ENCODE measurements at regions of chr10 and their contacts with region 1.

Region 1: GRCh38 chr10:79286318-79286951 is 60.8 kb upstream of the PPIF start:
- DNase-seq: peak; percentile 53 to 94 (median 86)
- ATAC-seq: peak; percentile 94
- H3K4me3 ChIP-seq: peak overlapping the region; percentile 16 to 23
- H3K4me3 Mint-ChIP-seq: peak overlapping the region; percentile 72
- H3K27ac ChIP-seq: peak overlapping the region; percentile 16 to 81
- H3K27ac Mint-ChIP-seq: peak overlapping the region; percentile 94
- H3K4me1 ChIP-seq: peaks cover 36% of the 10 kb centered on the region
- H3K4me1 Mint-ChIP-seq: peaks cover 36% of the 10 kb centered on the region
- H3K27me3 ChIP-seq: no peaks in the 10 kb centered on the region
- H3K27me3 Mint-ChIP-seq: no peaks in the 10 kb centered on the region
- CTCF ChIP-seq: no peak

Region 2: GRCh38 chr10:79242620-79243152 is 43.7 kb before region 1 on chr10:
- CTCF ChIA-PET with region 1: no interaction called
- POLR2A ChIA-PET with region 1: no interaction called
- intact Hi-C with region 1: loop called (anchors 1 to 2 kb)
- DNase-seq: peak in 8 of 9 experiments; percentile 13 to 80 (median 51)
- ATAC-seq: peak; percentile 51
- H3K4me3 ChIP-seq: peak overlapping the region; percentile 49 to 61
- H3K4me3 Mint-ChIP-seq: peak overlapping the region; percentile 76
- H3K27ac ChIP-seq: peak overlapping the region in 1 of 2 experiments; percentile 39
- H3K27ac Mint-ChIP-seq: no peak overlapping the region
- H3K4me1 ChIP-seq: peaks cover 33% of the 10 kb centered on the region
- H3K4me1 Mint-ChIP-seq: peaks cover 42% of the 10 kb centered on the region
- H3K27me3 ChIP-seq: no peaks in the 10 kb centered on the region
- H3K27me3 Mint-ChIP-seq: no peaks in the 10 kb centered on the region
- CTCF ChIP-seq: no peak

Region 3: GRCh38 chr10:79316671-79317431 is 30.4 kb after region 1 on chr10:
- CTCF ChIA-PET with region 1: no interaction called
- POLR2A ChIA-PET with region 1: interaction called, 4 read pairs
- intact Hi-C with region 1: loop called (anchors 1 kb)
- DNase-seq: peak in 3 of 9 experiments; percentile 33 to 58 (median 55)
- ATAC-seq: peak; percentile 37
- H3K4me3 ChIP-seq: peak overlapping the region; percentile 1 to 20
- H3K4me3 Mint-ChIP-seq: peak overlapping the region; percentile 58
- H3K27ac ChIP-seq: no peak overlapping the region
- H3K27ac Mint-ChIP-seq: peak overlapping the region; percentile 64
- H3K4me1 ChIP-seq: peaks cover 57% of the 10 kb centered on the region
- H3K4me1 Mint-ChIP-seq: peaks cover 58% of the 10 kb centered on the region
- H3K27me3 ChIP-seq: no peaks in the 10 kb centered on the region
- H3K27me3 Mint-ChIP-seq: no peaks in the 10 kb centered on the region
- CTCF ChIP-seq: no peak

Region 4: GRCh38 chr10:79322616-79323543 is 36.4 kb after region 1 on chr10:
- CTCF ChIA-PET with region 1: interaction called, 3 read pairs
- POLR2A ChIA-PET with region 1: interaction called, 4 read pairs
- intact Hi-C with region 1: loop called in 1 of 2 experiments (anchors 2 kb)
- DNase-seq: peak; percentile 60 to 93 (median 89)
- ATAC-seq: peak; percentile 89
- H3K4me3 ChIP-seq: peak overlapping the region; percentile 4 to 16
- H3K4me3 Mint-ChIP-seq: peak overlapping the region; percentile 77
- H3K27ac ChIP-seq: peak overlapping the region; percentile 51 to 70
- H3K27ac Mint-ChIP-seq: peak overlapping the region; percentile 95
- H3K4me1 ChIP-seq: peaks cover 68% of the 10 kb centered on the region
- H3K4me1 Mint-ChIP-seq: peaks cover 65% of the 10 kb centered on the region
- H3K27me3 ChIP-seq: no peaks in the 10 kb centered on the region
- H3K27me3 Mint-ChIP-seq: no peaks in the 10 kb centered on the region
- CTCF ChIP-seq: no peak

Measured in CD8-positive, alpha-beta T cell (primary cell).